ENCODE measurements at regions of chr3 and their contacts with region 1.

Region 1: GRCh38 chr3:112136959-112137693 is 4.1 kb upstream of the GCSAM start:
- DNase-seq: no peak
- ATAC-seq: peak; percentile 42
- H3K4me3 ChIP-seq: no peak overlapping the region
- H3K27ac ChIP-seq: peak overlapping the region; percentile 99
- H3K4me1 ChIP-seq: peaks cover 47% of the 10 kb centered on the region
- H3K27me3 ChIP-seq: no peaks in the 10 kb centered on the region
- CTCF ChIP-seq: peak; percentile 67 to 88 (median 81); a peak in 5 of 6 replicates
- EP300 ChIP-seq: 0 out of 4 replicates have a peak, but pooled peaks of 1 of the 2 experiments have one; percentile 32
- POLR2A ChIP-seq: peak; percentile 67
- RAD21 ChIP-seq: peak; percentile 94

Region 2: DNA sequence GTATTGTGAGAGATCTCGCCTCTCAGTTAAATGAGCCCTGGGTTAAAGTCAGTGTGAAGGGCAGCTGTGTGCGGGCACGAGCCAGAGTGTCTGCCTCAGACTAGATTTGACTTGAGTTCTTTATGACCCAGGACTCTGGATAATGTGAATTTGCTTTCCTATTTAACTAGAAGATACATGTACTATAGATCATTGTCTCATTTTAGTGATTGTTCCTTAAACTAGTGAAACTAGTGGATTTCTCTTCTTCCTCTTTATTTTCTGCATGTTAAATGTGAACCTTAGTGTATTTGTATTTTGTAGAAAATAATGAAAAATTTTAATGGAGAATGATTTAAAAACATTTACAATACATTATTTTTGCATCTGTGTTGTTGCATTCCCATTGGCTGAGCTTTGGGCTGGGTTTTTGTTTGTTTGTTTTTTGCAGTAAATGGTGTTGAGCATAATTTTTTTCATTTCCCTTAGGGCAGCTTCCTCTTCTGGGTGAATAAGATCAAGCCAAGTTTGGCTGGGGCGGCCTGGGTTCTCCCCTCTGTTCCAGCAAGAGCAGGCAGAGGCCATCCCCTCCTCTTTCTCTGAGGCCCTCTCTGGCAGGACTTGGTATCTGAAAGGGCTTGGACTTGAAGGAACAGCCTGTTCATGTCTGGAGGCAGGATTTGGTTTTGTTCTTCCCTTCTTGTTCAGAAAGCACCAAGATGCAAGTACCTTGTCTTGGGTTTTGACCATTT is 19.1 kb before region 1 on chr3:
- CTCF ChIA-PET with region 1: interaction called, 226 read pairs
- POLR2A ChIA-PET with region 1: interaction called, 345 read pairs
- RAD21 ChIA-PET with region 1: interaction called, 457 read pairs
- SMC1A ChIA-PET with region 1: interaction called, 489 read pairs
- in situ Hi-C with region 1: no loop called
- intact Hi-C with region 1: loop called (anchors 1 kb)
- DNase-seq: no peak
- ATAC-seq: peak; percentile 48
- H3K4me3 ChIP-seq: peak overlapping the region; percentile 48; the same call in 1 of the 2 replicates
- H3K27ac ChIP-seq: peak overlapping the region; percentile 95
- H3K4me1 ChIP-seq: peaks cover 92% of the 10 kb centered on the region
- H3K27me3 ChIP-seq: no peaks in the 10 kb centered on the region
- CTCF ChIP-seq: peak; percentile 32 to 34 (median 33); a peak in 5 of 6 replicates
- EP300 ChIP-seq: no peak
- POLR2A ChIP-seq: peak; percentile 47; the same call in 1 of the 2 replicates
- RAD21 ChIP-seq: peak; percentile 43

Region 3: DNA sequence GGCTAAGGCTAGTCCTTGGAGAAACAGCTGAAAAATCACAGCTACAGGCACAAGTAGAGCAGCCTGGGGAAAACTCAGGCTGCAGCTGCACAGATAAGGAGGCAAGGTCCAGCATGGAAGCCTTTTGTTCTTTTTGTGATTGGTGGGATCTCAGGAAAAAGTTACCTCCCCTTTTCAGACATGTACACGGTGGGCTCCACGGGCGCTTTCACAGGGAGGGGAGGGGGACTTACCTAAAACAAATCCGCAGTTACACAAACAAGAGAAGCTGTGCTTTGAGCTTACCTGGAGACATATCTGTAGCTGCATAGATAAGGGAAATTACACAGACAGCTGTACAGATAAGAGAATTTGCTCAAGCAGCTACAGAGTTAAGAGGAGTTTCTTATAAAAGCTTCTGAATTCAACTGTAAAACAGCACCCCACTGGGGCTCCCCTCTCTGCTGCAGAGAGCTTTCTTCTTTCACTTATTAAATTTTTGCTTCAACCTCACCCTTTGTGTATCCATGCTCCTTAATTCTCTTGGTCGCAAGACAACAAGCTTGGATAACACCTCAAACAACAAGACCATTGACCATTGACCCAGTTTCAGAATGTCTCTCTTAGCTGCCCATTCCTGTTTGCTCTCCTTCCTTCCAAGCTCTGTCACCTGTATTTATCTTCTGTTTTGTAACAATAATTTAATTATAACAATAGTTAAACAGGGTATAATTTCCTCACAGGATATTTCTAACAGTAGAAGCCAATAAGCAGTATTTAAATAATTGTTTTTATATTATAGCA is 184.9 kb after region 1 on chr3:
- CTCF ChIA-PET with region 1: interaction called, 48 read pairs
- POLR2A ChIA-PET with region 1: interaction called, 3 read pairs
- RAD21 ChIA-PET with region 1: interaction called, 30 read pairs
- SMC1A ChIA-PET with region 1: interaction called, 15 read pairs
- in situ Hi-C with region 1: no loop called
- intact Hi-C with region 1: loop called (anchors 1 kb)
- DNase-seq: no peak
- ATAC-seq: no peak
- H3K4me3 ChIP-seq: no peak overlapping the region
- H3K27ac ChIP-seq: no peak overlapping the region
- H3K4me1 ChIP-seq: no peaks in the 10 kb centered on the region
- H3K27me3 ChIP-seq: no peaks in the 10 kb centered on the region
- CTCF ChIP-seq: no peak
- EP300 ChIP-seq: no peak
- POLR2A ChIP-seq: no peak
- RAD21 ChIP-seq: no peak

Region 4: GRCh38 chr3:112456147-112456546 is 319.0 kb after region 1 on chr3:
- CTCF ChIA-PET with region 1: interaction called, 8 read pairs
- POLR2A ChIA-PET with region 1: interaction called, 6 read pairs
- RAD21 ChIA-PET with region 1: interaction called, 18 read pairs
- SMC1A ChIA-PET with region 1: interaction called, 12 read pairs
- in situ Hi-C with region 1: no loop called
- intact Hi-C with region 1: loop called (anchors 1 kb)
- DNase-seq: no peak
- ATAC-seq: peak; percentile 46
- H3K4me3 ChIP-seq: no peak overlapping the region
- H3K27ac ChIP-seq: peak overlapping the region; percentile 61
- H3K4me1 ChIP-seq: peaks cover 17% of the 10 kb centered on the region
- H3K27me3 ChIP-seq: no peaks in the 10 kb centered on the region
- CTCF ChIP-seq: no peak
- EP300 ChIP-seq: peak; percentile 59 to 68; a peak in 1 of 4 replicates
- POLR2A ChIP-seq: no peak
- RAD21 ChIP-seq: peak; percentile 21; the same call in 1 of the 2 replicates

Region 5: GRCh38 chr3:112498914-112499711 is 362.0 kb after region 1 on chr3 and contains the start of gene BTLA:
- CTCF ChIA-PET with region 1: interaction called, 7 read pairs
- POLR2A ChIA-PET with region 1: interaction called, 33 read pairs
- RAD21 ChIA-PET with region 1: interaction called, 8 read pairs
- SMC1A ChIA-PET with region 1: interaction called, 15 read pairs
- in situ Hi-C with region 1: no loop called
- intact Hi-C with region 1: loop called (anchors 10 kb)
- DNase-seq: peak; percentile 79
- ATAC-seq: peak; percentile 64
- H3K4me3 ChIP-seq: peak within 1 kb of the TSS; percentile 89
- H3K27ac ChIP-seq: peak within 1 kb of the TSS; percentile 87
- H3K4me1 ChIP-seq: peaks cover 13% of the 10 kb centered on the region
- H3K27me3 ChIP-seq: no peaks in the 10 kb centered on the region
- CTCF ChIP-seq: no peak
- EP300 ChIP-seq: peak in 1 of 2 experiments; percentile 39; a peak in 1 of 4 replicates
- POLR2A ChIP-seq: peak; percentile 52; the same call in 1 of the 2 replicates
- RAD21 ChIP-seq: no peak
- polyA plus RNA-seq, gene BTLA: 101 to 134 TPM

Measured in GM12878 (cell line).